ENCODE measurements at regions of chr4 and their contacts with region 1.

Region 1: GRCh38 chr4:13654158-13654797 is 26.8 kb upstream of the BOD1L1 start:
- DNase-seq: peak; percentile 58 to 85 (median 77)
- ATAC-seq: peak; percentile 95
- H3K4me3 ChIP-seq: peak overlapping the region; percentile 54 to 65
- H3K4me3 Mint-ChIP-seq: peak overlapping the region; percentile 87
- H3K27ac ChIP-seq: no peak overlapping the region
- H3K27ac Mint-ChIP-seq: no peak overlapping the region
- H3K4me1 ChIP-seq: peaks cover 4% of the 10 kb centered on the region
- H3K4me1 Mint-ChIP-seq: peaks cover 16% of the 10 kb centered on the region
- H3K27me3 ChIP-seq: no peaks in the 10 kb centered on the region
- H3K27me3 Mint-ChIP-seq: peaks cover 12% of the 10 kb centered on the region
- CTCF ChIP-seq: peak; percentile 80

Region 2: DNA sequence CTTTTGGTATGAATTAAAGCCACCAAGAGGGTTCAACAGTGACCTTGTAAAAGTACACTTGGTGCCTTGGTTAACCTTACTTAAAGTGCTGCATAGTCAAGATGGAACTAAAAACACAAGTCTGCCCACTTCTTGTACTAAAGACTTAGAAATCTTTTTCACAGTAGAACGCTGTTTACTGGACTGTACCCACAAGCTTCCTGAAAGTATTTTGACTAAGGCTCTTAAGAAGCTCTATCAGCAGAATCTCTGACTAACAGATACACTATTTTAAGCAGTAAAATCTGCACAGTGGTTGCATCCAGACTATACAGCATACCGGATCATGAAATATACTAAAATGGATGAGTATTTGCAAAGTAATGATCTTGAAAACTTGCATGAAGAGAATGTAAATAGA is 177.4 kb before region 1 on chr4:
- CTCF ChIA-PET with region 1: no interaction called
- POLR2A ChIA-PET with region 1: no interaction called
- intact Hi-C with region 1: no loop called
- DNase-seq: no peak
- ATAC-seq: no peak
- H3K4me3 ChIP-seq: no peak overlapping the region
- H3K4me3 Mint-ChIP-seq: no peak overlapping the region
- H3K27ac ChIP-seq: no peak overlapping the region
- H3K27ac Mint-ChIP-seq: no peak overlapping the region
- H3K4me1 ChIP-seq: no peaks in the 10 kb centered on the region
- H3K4me1 Mint-ChIP-seq: peaks cover 10% of the 10 kb centered on the region
- H3K27me3 ChIP-seq: no peaks in the 10 kb centered on the region
- H3K27me3 Mint-ChIP-seq: no peaks in the 10 kb centered on the region
- CTCF ChIP-seq: no peak

Region 3: GRCh38 chr4:13633671-13634070 is 20.6 kb before region 1 on chr4:
- CTCF ChIA-PET with region 1: interaction called, 27 read pairs
- POLR2A ChIA-PET with region 1: interaction called, 10 read pairs
- intact Hi-C with region 1: no loop called
- DNase-seq: no peak
- ATAC-seq: no peak
- H3K4me3 ChIP-seq: no peak overlapping the region
- H3K4me3 Mint-ChIP-seq: no peak overlapping the region
- H3K27ac ChIP-seq: no peak overlapping the region
- H3K27ac Mint-ChIP-seq: no peak overlapping the region
- H3K4me1 ChIP-seq: peaks cover 4% of the 10 kb centered on the region
- H3K4me1 Mint-ChIP-seq: peaks cover 2% of the 10 kb centered on the region
- H3K27me3 ChIP-seq: peaks cover 0 to 2% of the 10 kb centered on the region in 2 experiments
- H3K27me3 Mint-ChIP-seq: peaks cover 5% of the 10 kb centered on the region
- CTCF ChIP-seq: no peak

Region 4: DNA sequence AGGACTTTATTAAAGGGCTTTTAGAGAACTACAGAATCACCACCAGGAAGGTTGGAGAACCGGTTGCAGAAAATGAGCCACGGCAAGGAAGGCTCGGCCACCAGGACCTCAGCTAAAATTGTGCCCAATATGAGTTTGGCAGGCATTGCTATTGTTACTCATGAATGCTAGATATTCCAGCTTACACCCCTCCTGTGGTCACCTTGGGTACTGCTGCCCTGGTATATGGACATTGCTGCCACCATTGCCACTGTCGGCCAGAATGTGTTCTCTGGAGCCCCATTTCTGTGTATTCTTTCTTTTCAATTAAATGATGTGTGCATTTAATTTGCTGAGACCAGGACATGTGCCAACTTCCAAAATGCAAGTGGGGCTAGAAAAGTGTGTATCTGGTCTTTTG is 600.0 kb after region 1 on chr4:
- CTCF ChIA-PET with region 1: no interaction called
- POLR2A ChIA-PET with region 1: no interaction called
- intact Hi-C with region 1: loop called in 1 of 2 experiments (anchors 10 kb)
- DNase-seq: peak in 2 of 9 experiments; percentile 2 to 3
- ATAC-seq: no peak
- H3K4me3 ChIP-seq: no peak overlapping the region
- H3K4me3 Mint-ChIP-seq: no peak overlapping the region
- H3K27ac ChIP-seq: no peak overlapping the region
- H3K27ac Mint-ChIP-seq: no peak overlapping the region
- H3K4me1 ChIP-seq: no peaks in the 10 kb centered on the region
- H3K4me1 Mint-ChIP-seq: no peaks in the 10 kb centered on the region
- H3K27me3 ChIP-seq: no peaks in the 10 kb centered on the region
- H3K27me3 Mint-ChIP-seq: no peaks in the 10 kb centered on the region
- CTCF ChIP-seq: no peak

Region 5: DNA sequence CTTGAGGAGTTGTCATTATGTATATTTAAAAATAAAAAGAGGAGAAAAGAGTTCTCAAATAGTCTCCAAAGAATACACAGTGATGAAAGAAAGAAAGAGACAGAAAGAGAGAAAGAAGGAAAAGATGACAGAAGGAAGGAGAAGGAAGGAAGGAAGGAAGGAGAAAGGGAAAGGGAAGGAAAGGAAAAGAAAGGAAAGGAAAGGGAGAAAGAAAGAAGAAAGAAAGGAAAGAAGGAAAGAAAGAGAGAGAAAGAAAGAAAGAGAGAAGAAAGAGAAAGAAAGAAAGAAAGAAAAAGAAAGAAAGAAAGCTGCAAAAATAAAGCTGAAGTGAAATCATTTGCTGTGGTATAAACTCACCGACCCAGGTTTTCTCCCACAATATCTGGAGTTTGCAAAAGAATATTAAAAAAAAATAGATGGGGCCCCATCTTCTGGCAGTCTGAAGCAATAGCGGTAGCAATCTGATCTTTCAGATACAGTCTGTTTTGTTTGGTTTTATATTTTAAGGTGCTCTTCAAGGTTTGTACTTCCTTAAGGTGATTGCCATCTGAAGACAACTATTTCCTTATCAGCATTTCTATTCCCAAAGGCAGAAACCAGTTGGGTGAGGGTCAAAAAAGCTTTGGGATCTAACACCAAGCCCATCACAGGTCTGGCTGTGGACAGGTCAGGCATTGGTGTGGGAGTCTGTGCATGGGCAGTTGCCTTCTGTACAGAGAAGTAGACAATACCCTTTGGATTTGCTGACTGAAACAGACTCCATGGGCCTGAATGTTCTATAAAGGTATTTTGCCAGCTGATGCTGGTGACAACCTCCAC is 1508.4 kb after region 1 on chr4:
- CTCF ChIA-PET with region 1: no interaction called
- POLR2A ChIA-PET with region 1: no interaction called
- intact Hi-C with region 1: loop called (anchors 2 kb)
- DNase-seq: peak in 1 of 9 experiments; percentile 8
- ATAC-seq: no peak
- H3K4me3 ChIP-seq: no peak overlapping the region
- H3K4me3 Mint-ChIP-seq: no peak overlapping the region
- H3K27ac ChIP-seq: no peak overlapping the region
- H3K27ac Mint-ChIP-seq: no peak overlapping the region
- H3K4me1 ChIP-seq: no peaks in the 10 kb centered on the region
- H3K4me1 Mint-ChIP-seq: no peaks in the 10 kb centered on the region
- H3K27me3 ChIP-seq: no peaks in the 10 kb centered on the region
- H3K27me3 Mint-ChIP-seq: peaks cover 19% of the 10 kb centered on the region
- CTCF ChIP-seq: peak; percentile 37

Region 6: GRCh38 chr4:15457406-15458201 is 1803.3 kb after region 1 on chr4:
- CTCF ChIA-PET with region 1: interaction called, 4 read pairs
- POLR2A ChIA-PET with region 1: no interaction called
- intact Hi-C with region 1: loop called (anchors 2 kb)
- DNase-seq: peak in 2 of 9 experiments; percentile 45 to 63
- ATAC-seq: peak; percentile 59
- H3K4me3 ChIP-seq: no peak overlapping the region
- H3K4me3 Mint-ChIP-seq: no peak overlapping the region
- H3K27ac ChIP-seq: no peak overlapping the region
- H3K27ac Mint-ChIP-seq: no peak overlapping the region
- H3K4me1 ChIP-seq: no peaks in the 10 kb centered on the region
- H3K4me1 Mint-ChIP-seq: peaks cover 3% of the 10 kb centered on the region
- H3K27me3 ChIP-seq: no peaks in the 10 kb centered on the region
- H3K27me3 Mint-ChIP-seq: no peaks in the 10 kb centered on the region
- CTCF ChIP-seq: peak; percentile 77